Activated CD4-positive, alpha-beta memory T cell treated with anti-CD3 and anti-CD28 coated beads for 36 hours (primary cell): ENCODE measurements at regions of chr17 and their contacts with region 1.

Region 1: DNA sequence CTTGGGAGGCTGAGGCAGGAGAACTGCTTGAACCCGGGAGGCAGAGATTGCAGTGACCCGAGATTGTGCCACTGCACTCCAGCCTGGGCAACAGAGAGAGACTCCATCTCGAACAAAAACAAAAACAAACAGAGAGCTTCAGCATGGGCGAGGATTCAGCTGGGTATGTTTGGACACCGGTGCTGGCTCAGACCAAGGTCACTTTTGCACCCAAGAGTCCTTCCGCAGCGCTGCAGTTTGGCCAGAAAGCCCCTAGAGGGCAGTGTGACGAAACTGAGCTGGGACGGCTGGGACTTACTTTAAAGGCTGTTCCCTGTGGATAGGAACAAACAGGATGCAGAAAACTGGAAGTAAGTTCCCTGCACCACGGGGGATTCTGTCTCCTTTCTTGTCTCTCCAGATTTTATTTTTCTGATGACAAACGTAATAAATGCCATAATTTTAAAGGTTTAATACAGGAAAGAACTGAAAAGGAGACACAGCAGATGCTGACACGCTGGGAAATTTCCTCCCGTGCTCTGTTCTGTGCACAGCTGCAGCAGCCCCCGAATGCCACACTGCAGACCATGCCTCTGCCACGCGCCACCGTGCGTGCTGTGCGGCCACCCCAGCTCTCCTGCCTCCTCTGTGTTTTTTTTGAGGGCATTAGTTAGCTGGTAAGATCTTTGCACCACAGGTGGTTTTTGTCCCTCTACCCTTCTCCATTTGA is 25.2 kb upstream of the USP36 start:
- DNase-seq: peak; percentile 78
- H3K4me3 Mint-ChIP-seq: no peak overlapping the region
- H3K27ac Mint-ChIP-seq: no peak overlapping the region
- H3K4me1 Mint-ChIP-seq: peaks cover 3% of the 10 kb centered on the region
- H3K27me3 Mint-ChIP-seq: peaks cover 7% of the 10 kb centered on the region

Region 2: DNA sequence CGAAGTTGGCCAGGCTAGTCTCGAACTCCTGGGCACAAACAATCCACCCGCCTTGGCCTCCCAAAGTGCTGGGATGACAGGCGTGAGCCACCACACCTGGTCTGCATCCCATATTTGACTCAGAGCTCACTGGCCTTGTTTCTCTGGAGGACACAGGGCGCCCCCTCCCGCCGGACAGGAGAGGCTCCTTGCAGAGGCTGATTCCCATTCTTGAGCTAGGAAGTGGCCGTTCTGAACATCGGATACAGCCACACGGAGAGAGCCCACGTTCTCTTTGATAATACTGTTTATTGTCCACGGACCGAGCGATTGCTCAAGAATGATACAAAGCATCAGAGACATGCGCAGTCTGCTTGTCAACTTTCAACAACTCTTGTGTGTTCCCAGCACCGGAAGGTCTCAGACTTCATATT is 13.1 kb before region 1 on chr17:
- CTCF ChIA-PET with region 1: interaction called, 14 read pairs
- POLR2A ChIA-PET with region 1: no interaction called
- intact Hi-C with region 1: no loop called
- DNase-seq: no peak
- H3K4me3 Mint-ChIP-seq: no peak overlapping the region
- H3K27ac Mint-ChIP-seq: no peak overlapping the region
- H3K4me1 Mint-ChIP-seq: no peaks in the 10 kb centered on the region
- H3K27me3 Mint-ChIP-seq: no peaks in the 10 kb centered on the region

Region 3: DNA sequence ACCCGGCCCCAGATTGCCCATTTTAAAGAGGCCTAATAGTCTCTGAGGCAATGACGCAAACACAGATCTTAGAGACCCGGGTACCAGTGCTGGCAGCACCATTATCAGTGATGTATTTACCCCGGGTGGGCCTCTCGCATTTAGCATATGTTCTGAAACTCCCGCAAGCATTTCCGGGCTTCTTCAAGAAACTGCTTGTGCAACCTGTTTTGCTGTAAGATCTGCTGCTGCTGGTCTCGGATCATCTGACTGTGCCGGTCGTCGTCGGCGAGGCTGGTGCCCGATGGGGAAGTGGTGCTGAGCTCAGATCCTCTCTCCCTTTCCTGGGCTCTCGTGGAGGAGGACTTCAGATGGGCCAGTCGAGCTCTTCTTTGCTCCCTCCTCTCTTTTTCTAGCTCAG is 24.7 kb after region 1 on chr17:
- CTCF ChIA-PET with region 1: interaction called, 11 read pairs
- POLR2A ChIA-PET with region 1: no interaction called
- intact Hi-C with region 1: no loop called
- DNase-seq: peak; percentile 81
- H3K4me3 Mint-ChIP-seq: no peak overlapping the region
- H3K27ac Mint-ChIP-seq: peak overlapping the region; percentile 35
- H3K4me1 Mint-ChIP-seq: peaks cover 31% of the 10 kb centered on the region
- H3K27me3 Mint-ChIP-seq: peaks cover 3% of the 10 kb centered on the region

Region 4: DNA sequence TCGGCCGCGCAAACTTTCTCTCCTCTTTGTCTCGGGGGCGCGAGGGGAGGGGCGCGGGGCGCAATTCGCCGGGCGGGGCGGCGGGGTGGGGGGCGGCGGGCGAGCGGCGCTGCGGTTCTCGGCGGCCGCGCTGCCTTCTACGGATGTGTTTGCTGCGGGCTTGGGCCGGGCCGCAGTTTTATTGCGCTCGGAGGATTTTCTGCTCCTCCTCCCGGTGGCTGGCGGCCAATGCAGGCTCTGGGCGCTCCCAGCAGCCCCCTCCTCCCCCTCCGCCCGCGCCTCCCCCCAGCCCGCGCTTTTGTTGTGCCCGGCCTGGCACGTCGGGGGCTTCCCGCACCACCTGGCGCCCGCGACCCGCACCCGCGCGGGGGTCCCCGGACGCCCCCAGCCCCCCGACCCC is 59.4 kb after region 1 on chr17 and contains the start of gene TIMP2:
- CTCF ChIA-PET with region 1: interaction called, 3 read pairs
- POLR2A ChIA-PET with region 1: no interaction called
- intact Hi-C with region 1: loop called (anchors 10 kb)
- DNase-seq: peak; percentile 74
- H3K4me3 Mint-ChIP-seq: peak within 1 kb of the TSS; percentile 26
- H3K27ac Mint-ChIP-seq: no peak within 1 kb of the TSS
- H3K4me1 Mint-ChIP-seq: peaks cover 10% of the 10 kb centered on the region
- H3K27me3 Mint-ChIP-seq: peaks cover 17% of the 10 kb centered on the region
- total RNA-seq, gene TIMP2: 1.1 TPM

Region 5: GRCh38 chr17:78970834-78971773 is 105.3 kb after region 1 on chr17:
- CTCF ChIA-PET with region 1: interaction called, 89 read pairs
- POLR2A ChIA-PET with region 1: interaction called, 4 read pairs
- intact Hi-C with region 1: loop called (anchors 1 kb)
- DNase-seq: peak; percentile 85
- H3K4me3 Mint-ChIP-seq: no peak overlapping the region
- H3K27ac Mint-ChIP-seq: peak overlapping the region; percentile 53
- H3K4me1 Mint-ChIP-seq: peaks cover 6% of the 10 kb centered on the region
- H3K27me3 Mint-ChIP-seq: no peaks in the 10 kb centered on the region

Region 6: GRCh38 chr17:79009397-79010308 is 143.8 kb after region 1 on chr17 and contains the start of gene CANT1:
- CTCF ChIA-PET with region 1: no interaction called
- POLR2A ChIA-PET with region 1: no interaction called
- intact Hi-C with region 1: no loop called
- DNase-seq: peak; percentile 89
- H3K4me3 Mint-ChIP-seq: peak within 1 kb of the TSS; percentile 91
- H3K27ac Mint-ChIP-seq: peak within 1 kb of the TSS; percentile 89
- H3K4me1 Mint-ChIP-seq: peaks cover 43% of the 10 kb centered on the region
- H3K27me3 Mint-ChIP-seq: no peaks in the 10 kb centered on the region
- total RNA-seq, gene CANT1: 63.3 to 65.4 TPM

Region 7: GRCh38 chr17:79019632-79020584 is 154.1 kb after region 1 on chr17:
- CTCF ChIA-PET with region 1: no interaction called
- POLR2A ChIA-PET with region 1: no interaction called
- intact Hi-C with region 1: no loop called
- DNase-seq: peak; percentile 58
- H3K4me3 Mint-ChIP-seq: no peak overlapping the region
- H3K27ac Mint-ChIP-seq: no peak overlapping the region
- H3K4me1 Mint-ChIP-seq: peaks cover 8% of the 10 kb centered on the region
- H3K27me3 Mint-ChIP-seq: peaks cover 18% of the 10 kb centered on the region